ENCODE measurements at regions of chr11 and their contacts with region 1.

Region 1: DNA sequence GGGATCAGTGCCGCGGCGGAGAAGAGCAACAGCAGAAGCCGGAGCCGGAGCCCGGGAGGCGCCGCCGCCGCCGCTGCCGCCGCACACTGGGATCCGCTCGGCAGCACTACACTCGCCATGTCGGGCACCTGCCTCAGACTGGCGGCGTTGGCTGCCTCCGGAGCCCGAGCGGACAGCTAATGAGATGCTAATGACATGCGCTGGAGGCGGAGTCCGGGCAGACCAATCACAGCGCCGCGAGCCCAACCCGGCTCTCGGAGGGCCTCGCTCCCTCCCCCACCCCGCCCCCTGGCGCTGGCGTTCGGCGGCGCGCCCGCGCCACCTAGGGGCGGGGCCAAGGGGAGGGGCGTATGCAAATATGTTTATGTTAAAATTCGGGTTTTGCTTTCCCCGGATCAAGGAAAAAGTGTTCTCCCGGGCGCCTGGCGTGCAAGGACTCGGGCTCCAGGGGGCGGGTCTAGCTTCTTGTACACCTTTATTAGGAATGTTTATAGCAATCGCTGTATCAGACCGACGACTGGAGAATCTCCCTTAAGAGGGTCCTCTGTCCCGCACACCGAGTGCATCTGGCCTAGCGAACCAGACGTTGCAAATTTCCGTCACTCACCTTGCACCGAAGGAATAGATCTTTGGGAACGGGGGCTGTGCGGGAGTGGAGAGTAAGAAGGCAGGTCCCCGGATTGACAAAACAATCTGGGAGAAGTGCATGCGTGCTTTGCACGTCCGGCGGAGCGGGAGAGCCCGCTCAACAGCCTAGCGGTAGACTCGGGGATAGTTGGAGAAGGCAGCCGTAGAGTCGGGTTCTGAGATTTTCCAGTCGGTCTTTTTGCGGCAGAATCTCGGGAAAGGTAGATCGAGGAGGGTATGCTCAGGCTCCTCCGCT is at the start of gene CADM1:
- DNase-seq: peak; percentile 74 to 91 (median 79)
- H3K4me3 ChIP-seq: peak within 1 kb of the TSS; percentile 54 to 57
- H3K4me3 Mint-ChIP-seq: peak within 1 kb of the TSS; percentile 84 to 91 (median 85)
- H3K27ac ChIP-seq: no peak within 1 kb of the TSS
- H3K27ac Mint-ChIP-seq: peak within 1 kb of the TSS in 5 of 7 donors; percentile 56 to 82 (median 77)
- H3K4me1 ChIP-seq: peaks cover 31% of the 10 kb centered on the region
- H3K4me1 Mint-ChIP-seq: peaks cover 4 to 11% (median 5%) of the 10 kb centered on the region in 4 donors
- H3K27me3 ChIP-seq: peaks cover 26% of the 10 kb centered on the region
- H3K27me3 Mint-ChIP-seq: peaks cover 9 to 18% of the 10 kb centered on the region in 2 donors
- total RNA-seq, gene CADM1: 3.8 to 5.6 TPM

Region 2: DNA sequence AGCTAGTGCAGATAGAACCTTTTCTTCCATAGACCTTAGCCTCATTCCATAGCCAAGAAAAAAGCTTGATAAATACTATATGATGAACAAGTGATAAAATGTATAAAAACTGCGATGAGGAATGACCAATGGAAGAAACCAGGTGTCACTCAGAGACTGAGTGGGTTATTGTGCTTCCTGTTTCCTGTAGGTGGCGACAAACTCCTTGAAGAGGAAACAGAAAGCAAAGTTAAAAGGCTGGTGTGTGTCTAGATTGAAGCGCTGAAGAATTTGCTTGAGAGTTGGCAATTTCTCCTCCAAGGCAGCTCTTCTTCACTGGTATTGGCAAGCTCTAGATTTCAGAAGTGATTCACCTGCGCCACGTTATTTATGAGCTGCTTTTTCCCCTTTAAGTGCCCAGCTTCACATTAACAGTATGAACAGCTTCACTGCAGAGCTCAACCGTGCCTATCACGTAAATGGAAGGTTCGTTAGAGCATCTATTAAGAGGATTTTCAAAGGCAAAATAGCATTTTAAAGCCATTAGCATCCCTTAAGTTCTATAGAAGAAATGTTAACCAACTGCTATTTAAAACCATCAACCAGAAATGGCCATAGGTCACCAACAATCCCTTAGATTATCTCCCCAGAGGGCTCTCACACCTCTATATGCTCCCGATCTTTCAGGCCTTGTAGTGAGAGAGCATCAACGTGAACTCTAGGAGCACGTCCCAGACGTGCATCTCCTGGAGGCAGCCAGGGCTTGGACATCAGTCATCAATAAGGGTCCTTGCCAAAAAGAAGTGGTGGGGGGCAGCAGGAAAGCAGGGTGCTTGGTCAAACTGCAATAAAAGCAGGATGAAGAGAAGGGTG is 179.7 kb before region 1 on chr11:
- CTCF ChIA-PET with region 1: no interaction called
- POLR2A ChIA-PET with region 1: no interaction called
- intact Hi-C with region 1: loop called (anchors 5 kb)
- DNase-seq: peak in 4 of 5 donors; percentile 25 to 42 (median 31)
- H3K4me3 ChIP-seq: no peak overlapping the region
- H3K4me3 Mint-ChIP-seq: peak overlapping the region in 1 of 8 donors; percentile 18
- H3K27ac ChIP-seq: no peak overlapping the region
- H3K27ac Mint-ChIP-seq: no peak overlapping the region
- H3K4me1 ChIP-seq: no peaks in the 10 kb centered on the region
- H3K4me1 Mint-ChIP-seq: peaks cover 1 to 7% (median 4%) of the 10 kb centered on the region in 4 donors
- H3K27me3 ChIP-seq: no peaks in the 10 kb centered on the region
- H3K27me3 Mint-ChIP-seq: peaks cover 0 to 1% of the 10 kb centered on the region in 2 donors

Region 3: DNA sequence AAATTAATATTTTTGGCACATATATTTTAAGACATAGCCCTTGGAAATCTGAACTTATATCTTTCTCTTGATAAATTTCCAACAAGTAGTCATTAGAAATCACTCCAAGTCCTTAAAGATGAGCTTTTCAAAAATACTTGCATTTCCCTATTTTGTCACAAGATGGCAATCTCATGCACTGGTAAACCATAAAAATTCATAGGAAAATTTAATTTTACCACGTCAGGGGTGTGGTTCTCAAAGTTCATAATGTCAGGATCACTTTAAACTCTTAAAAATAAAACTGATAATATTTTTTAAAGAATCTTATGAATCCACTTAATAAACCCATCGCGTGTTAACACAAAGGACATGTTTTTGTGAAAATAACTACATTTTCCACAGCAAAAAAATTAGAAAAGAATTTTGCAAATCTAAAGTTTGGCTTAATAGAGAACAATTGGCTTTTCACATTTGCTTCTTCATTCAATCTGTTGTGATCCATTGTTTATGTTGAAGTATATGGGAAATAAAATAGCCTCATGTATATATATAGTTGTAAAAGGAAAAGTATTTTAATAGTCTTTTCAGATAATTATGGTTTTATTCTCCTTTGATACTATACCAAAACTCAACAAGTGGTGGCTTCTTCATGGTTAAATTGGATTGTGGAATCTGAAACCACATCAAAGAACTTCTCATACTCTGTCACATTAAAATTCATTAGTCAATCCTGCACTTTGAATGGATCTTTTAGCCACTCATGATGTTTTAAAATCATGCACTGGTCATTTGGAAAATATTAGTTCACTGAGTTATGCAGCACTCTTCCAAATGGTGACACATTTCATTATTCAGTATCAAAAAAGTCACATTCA is 169.4 kb before region 1 on chr11:
- CTCF ChIA-PET with region 1: interaction called, 4 read pairs
- POLR2A ChIA-PET with region 1: no interaction called
- intact Hi-C with region 1: loop called (anchors 2 kb)
- DNase-seq: peak in 1 of 5 donors; percentile 12
- H3K4me3 ChIP-seq: no peak overlapping the region
- H3K4me3 Mint-ChIP-seq: no peak overlapping the region
- H3K27ac ChIP-seq: no peak overlapping the region
- H3K27ac Mint-ChIP-seq: no peak overlapping the region
- H3K4me1 ChIP-seq: no peaks in the 10 kb centered on the region
- H3K4me1 Mint-ChIP-seq: no peaks in the 10 kb centered on the region
- H3K27me3 ChIP-seq: no peaks in the 10 kb centered on the region
- H3K27me3 Mint-ChIP-seq: peaks cover 0 to 2% of the 10 kb centered on the region in 2 donors

Region 4: GRCh38 chr11:115488945-115489344 is 15.6 kb before region 1 on chr11:
- CTCF ChIA-PET with region 1: no interaction called
- POLR2A ChIA-PET with region 1: no interaction called
- intact Hi-C with region 1: no loop called
- DNase-seq: no peak
- H3K4me3 ChIP-seq: no peak overlapping the region
- H3K4me3 Mint-ChIP-seq: no peak overlapping the region
- H3K27ac ChIP-seq: no peak overlapping the region
- H3K27ac Mint-ChIP-seq: no peak overlapping the region
- H3K4me1 ChIP-seq: no peaks in the 10 kb centered on the region
- H3K4me1 Mint-ChIP-seq: no peaks in the 10 kb centered on the region
- H3K27me3 ChIP-seq: no peaks in the 10 kb centered on the region
- H3K27me3 Mint-ChIP-seq: peaks cover 4 to 5% of the 10 kb centered on the region in 2 donors

Region 5: GRCh38 chr11:115616971-115617370 is 112.5 kb after region 1 on chr11:
- CTCF ChIA-PET with region 1: no interaction called
- POLR2A ChIA-PET with region 1: no interaction called
- intact Hi-C with region 1: no loop called
- DNase-seq: no peak
- H3K4me3 ChIP-seq: no peak overlapping the region
- H3K4me3 Mint-ChIP-seq: no peak overlapping the region
- H3K27ac ChIP-seq: no peak overlapping the region
- H3K27ac Mint-ChIP-seq: no peak overlapping the region
- H3K4me1 ChIP-seq: no peaks in the 10 kb centered on the region
- H3K4me1 Mint-ChIP-seq: no peaks in the 10 kb centered on the region
- H3K27me3 ChIP-seq: no peaks in the 10 kb centered on the region
- H3K27me3 Mint-ChIP-seq: peaks cover 0 to 3% of the 10 kb centered on the region in 2 donors

Region 6: DNA sequence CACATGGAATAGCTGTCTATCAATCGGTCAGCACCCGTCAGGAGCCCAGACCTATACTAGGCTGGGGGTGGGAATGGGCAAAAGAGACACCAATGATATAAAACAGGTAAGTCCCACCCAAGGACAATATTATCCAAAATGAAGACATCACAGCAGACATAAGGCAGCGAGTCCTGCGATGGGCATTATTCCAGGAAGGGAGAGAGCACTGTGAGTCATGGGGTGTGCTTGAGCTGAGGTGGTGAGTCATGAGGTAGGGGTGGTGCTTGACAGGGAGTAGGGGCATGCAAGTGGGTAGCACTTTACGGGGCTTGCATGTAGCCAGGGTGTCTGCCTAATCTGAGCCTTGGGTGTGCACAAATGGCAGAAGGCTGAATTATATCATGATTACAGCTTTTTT is 604.7 kb after region 1 on chr11:
- CTCF ChIA-PET with region 1: no interaction called
- POLR2A ChIA-PET with region 1: no interaction called
- intact Hi-C with region 1: no loop called
- DNase-seq: no peak
- H3K4me3 ChIP-seq: no peak overlapping the region
- H3K4me3 Mint-ChIP-seq: no peak overlapping the region
- H3K27ac ChIP-seq: no peak overlapping the region
- H3K27ac Mint-ChIP-seq: no peak overlapping the region
- H3K4me1 ChIP-seq: no peaks in the 10 kb centered on the region
- H3K4me1 Mint-ChIP-seq: no peaks in the 10 kb centered on the region
- H3K27me3 ChIP-seq: no peaks in the 10 kb centered on the region
- H3K27me3 Mint-ChIP-seq: no peaks in the 10 kb centered on the region

Measured in CD4-positive, alpha-beta memory T cell (primary cell).